Activated T-helper 1 cell treated with anti-CD3 and anti-CD28 coated beads, Interleukin-12 subunit alpha, Interleukin-12 subunit beta, Interleukin-2, Interleukin-4 antibody, amounts not matched to agents 30 ng/mL and 10 ng/mL and 1 ng/mL, durations not matched to agents 14 hours and 24 hours and 36 hours (primary cell): ENCODE measurements at regions of chr6 and their contacts with region 1.

Region 1: DNA sequence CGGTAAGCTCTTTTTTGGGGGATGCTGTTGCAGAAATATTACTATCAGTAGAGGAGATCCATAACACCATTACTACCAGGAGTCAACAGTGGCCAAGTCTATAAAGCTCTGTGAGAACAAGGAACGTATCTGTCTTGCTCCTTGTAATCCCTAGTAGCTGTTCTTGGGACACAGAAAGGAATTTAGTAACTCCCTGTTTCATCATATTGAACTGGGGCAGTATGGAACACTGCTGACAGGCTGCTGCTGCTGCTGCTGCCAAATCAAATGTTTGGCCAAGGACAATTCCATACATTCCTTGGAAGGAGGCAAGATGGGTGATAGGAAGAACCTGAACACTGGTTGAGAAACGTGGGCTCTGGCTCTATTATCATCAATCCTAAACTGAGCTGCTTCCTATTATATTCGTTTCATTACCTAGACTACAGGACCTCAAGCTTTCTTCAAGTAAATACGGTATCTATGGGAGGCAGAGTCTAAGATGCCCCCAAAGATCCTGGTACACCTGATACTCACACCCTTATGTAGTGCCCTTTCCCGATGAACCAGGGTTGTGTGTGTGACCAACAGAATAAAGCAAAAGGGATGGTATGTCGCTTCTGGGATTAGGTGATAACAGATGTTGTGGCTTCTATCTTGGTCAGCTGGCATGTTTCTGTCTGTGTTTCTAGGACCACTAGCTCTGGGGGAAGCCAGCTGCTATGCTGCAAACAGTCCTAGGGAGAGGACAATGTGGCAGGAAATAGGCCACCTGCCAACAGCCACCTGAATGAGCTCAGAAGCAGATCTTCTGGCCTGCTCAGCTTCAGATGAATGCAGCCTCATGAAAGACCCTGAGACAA is 39.5 kb downstream of the ELOVL5 start:
- DNase-seq: no peak
- H3K4me3 Mint-ChIP-seq: no peak overlapping the region
- H3K27ac Mint-ChIP-seq: peak overlapping the region; percentile 27
- H3K4me1 Mint-ChIP-seq: peaks cover 83% of the 10 kb centered on the region
- H3K27me3 Mint-ChIP-seq: no peaks in the 10 kb centered on the region

Region 2: DNA sequence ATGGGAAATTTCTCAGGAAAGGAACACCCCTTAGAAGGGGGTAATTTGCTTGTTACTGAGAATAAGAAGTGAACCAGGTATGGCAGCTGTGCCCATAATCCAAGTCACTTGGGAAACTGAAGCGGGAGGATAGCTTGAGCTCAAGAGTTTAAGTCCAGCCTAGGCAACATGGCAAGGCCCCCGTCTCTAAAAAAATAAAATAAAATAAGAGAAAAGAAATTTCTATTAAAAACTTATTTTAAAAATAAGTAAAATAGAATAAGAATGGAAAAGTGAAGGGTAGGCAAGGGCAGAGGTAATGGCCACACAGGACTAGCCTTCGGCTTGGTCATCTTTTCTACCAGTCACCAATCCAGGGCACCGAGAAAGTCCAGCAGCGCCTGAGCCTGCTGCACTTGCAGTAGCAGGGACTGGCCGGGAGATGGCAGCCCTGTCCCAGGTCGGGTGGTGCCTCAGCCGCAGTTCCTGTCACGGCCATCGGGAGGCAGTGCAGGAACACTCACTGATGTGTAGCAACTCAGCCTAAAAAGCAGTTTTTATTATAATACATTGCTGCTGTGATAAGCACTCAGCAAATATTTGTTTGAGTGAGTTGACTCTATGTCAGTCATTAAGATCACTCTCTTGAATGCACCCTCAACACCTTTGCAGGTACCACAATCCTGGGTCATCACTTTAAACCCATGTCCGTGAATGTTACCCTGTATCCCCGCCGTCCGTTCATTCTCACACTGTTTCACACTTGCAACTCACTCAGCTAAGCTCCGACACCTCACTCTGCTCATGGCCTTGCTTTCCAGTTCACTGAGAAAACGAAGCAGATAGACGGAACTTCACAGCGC is 137.5 kb before region 1 on chr6:
- intact Hi-C with region 1: no loop called
- DNase-seq: peak; percentile 82
- H3K4me3 Mint-ChIP-seq: no peak overlapping the region
- H3K27ac Mint-ChIP-seq: no peak overlapping the region
- H3K4me1 Mint-ChIP-seq: no peaks in the 10 kb centered on the region
- H3K27me3 Mint-ChIP-seq: no peaks in the 10 kb centered on the region

Region 3: DNA sequence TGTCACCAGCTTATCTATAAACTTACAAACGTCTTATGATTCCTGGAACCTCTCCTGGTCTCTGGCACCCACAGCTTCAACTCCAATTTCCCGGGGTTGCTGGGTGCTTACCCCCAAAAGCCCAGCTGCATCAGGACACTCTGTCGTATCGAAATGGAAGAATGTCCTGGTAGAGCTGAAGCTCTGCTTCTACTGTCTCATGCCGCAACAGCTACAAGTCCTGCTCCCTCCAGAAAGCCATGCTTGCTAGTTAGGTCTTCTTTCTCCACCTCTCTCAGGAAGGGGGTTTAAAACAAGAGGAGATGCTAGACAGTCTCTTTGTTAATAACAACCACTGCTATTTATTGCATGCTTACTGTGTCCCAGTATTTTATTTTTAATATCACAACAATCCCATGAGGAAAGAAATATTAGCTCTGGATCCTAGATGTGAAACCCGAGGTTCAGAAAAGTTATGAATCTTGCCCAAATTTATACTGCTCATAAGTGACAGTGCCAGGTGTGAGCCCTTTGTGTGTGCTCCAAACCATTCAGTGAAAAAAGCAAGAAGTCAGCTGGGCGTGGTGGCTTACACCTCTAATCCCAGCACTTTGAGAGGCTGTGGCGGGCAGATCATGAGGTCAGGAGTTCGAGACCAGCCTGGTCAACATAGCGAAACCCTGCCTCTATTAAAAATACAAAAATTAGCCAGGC is 78.4 kb before region 1 on chr6:
- intact Hi-C with region 1: loop called (anchors 2 kb)
- DNase-seq: no peak
- H3K4me3 Mint-ChIP-seq: no peak overlapping the region
- H3K27ac Mint-ChIP-seq: no peak overlapping the region
- H3K4me1 Mint-ChIP-seq: peaks cover 16% of the 10 kb centered on the region
- H3K27me3 Mint-ChIP-seq: no peaks in the 10 kb centered on the region

Region 4: DNA sequence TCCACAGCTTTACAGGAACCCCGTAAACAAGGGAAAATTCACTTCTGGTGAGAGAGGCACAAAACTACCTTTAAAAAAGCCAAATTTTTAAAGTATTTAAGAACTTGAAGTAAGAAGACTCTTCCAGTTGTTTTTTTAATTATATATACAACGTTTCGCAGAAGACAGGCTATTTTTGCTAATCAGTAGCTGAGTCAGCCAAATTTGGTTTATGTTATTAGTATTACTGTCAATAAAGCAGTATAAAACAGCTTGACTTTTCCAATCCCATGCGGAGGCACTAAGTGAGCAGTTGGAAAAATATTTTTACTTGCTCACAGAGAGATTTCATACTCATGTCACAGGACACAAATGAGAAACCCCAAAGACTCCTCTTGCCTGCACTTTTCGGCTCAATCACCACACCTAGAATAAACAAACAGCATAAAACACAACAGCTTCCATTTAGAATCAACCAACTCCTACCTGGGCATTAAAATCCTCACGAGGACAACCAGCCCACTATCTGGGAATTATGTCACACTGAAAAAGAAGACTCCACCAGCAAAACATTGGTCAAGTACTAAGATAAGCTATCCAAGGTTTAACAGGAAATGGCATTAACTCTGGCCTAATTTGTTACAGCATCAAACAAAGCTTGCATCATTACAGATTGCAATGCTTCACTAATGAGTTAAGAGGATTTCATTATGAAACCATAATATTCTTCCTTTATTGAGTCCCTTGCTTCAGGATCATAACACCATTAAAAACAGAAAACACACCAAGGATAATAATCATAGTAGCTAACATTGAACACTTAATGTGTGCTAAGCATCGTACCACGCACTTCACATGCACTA is 13.1 kb after region 1 on chr6:
- intact Hi-C with region 1: loop called (anchors 2 kb)
- DNase-seq: no peak
- H3K4me3 Mint-ChIP-seq: no peak overlapping the region
- H3K27ac Mint-ChIP-seq: no peak overlapping the region
- H3K4me1 Mint-ChIP-seq: peaks cover 47% of the 10 kb centered on the region
- H3K27me3 Mint-ChIP-seq: no peaks in the 10 kb centered on the region

Region 5: GRCh38 chr6:53359072-53359842 is 50.0 kb after region 1 on chr6:
- intact Hi-C with region 1: loop called (anchors 1 kb)
- DNase-seq: peak; percentile 93
- H3K4me3 Mint-ChIP-seq: peak overlapping the region; percentile 92
- H3K27ac Mint-ChIP-seq: peak overlapping the region; percentile 100
- H3K4me1 Mint-ChIP-seq: peaks cover 50% of the 10 kb centered on the region
- H3K27me3 Mint-ChIP-seq: peaks cover 5% of the 10 kb centered on the region

Region 6: GRCh38 chr6:53410508-53411258 is 101.4 kb after region 1 on chr6:
- intact Hi-C with region 1: loop called (anchors 5 kb)
- DNase-seq: peak; percentile 32
- H3K4me3 Mint-ChIP-seq: no peak overlapping the region
- H3K27ac Mint-ChIP-seq: no peak overlapping the region
- H3K4me1 Mint-ChIP-seq: no peaks in the 10 kb centered on the region
- H3K27me3 Mint-ChIP-seq: peaks cover 2% of the 10 kb centered on the region

Region 7: DNA sequence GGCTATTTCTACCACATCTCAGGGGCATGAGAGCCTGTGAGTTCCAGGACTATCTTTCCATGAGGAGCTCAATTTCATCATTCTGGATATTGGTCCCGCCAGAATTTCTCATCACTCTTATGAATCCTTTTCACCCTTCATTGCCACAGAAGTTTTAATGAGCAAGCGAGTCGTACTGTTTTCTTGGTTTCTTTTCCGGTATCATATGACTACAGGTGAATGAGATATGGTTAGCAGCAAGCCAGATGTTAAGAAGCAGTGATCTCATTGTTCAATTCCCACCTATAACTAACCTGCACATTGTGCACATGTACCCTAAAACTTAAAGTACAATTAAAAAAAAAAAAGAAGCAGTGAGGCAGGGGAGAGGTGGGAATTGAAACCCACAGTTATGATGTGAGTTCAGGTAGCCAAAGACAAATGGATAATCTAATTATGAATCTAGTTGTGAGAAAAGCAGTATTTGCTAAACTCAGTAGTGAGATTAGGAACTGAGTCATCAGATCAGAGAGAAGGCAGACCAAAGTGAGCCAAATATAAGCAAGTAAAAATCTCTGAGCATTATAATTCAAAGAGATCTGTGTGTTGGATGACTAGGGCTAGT is 117.5 kb after region 1 on chr6:
- intact Hi-C with region 1: loop called (anchors 5 kb)
- DNase-seq: no peak
- H3K4me3 Mint-ChIP-seq: no peak overlapping the region
- H3K27ac Mint-ChIP-seq: no peak overlapping the region
- H3K4me1 Mint-ChIP-seq: peaks cover 28% of the 10 kb centered on the region
- H3K27me3 Mint-ChIP-seq: no peaks in the 10 kb centered on the region